OCI-LY7 (cell line): ENCODE measurements at regions of chrX and their contacts with region 1.

Region 1: GRCh38 chrX:135521405-135522189 is 1.1 kb downstream of the INTS6L start:
- DNase-seq: peak; percentile 86
- H3K4me3 ChIP-seq: peak overlapping the region; percentile 84
- H3K27ac ChIP-seq: peak overlapping the region; percentile 91
- H3K4me1 ChIP-seq: peaks cover 11% of the 10 kb centered on the region
- CTCF ChIP-seq: no peak

Region 2: DNA sequence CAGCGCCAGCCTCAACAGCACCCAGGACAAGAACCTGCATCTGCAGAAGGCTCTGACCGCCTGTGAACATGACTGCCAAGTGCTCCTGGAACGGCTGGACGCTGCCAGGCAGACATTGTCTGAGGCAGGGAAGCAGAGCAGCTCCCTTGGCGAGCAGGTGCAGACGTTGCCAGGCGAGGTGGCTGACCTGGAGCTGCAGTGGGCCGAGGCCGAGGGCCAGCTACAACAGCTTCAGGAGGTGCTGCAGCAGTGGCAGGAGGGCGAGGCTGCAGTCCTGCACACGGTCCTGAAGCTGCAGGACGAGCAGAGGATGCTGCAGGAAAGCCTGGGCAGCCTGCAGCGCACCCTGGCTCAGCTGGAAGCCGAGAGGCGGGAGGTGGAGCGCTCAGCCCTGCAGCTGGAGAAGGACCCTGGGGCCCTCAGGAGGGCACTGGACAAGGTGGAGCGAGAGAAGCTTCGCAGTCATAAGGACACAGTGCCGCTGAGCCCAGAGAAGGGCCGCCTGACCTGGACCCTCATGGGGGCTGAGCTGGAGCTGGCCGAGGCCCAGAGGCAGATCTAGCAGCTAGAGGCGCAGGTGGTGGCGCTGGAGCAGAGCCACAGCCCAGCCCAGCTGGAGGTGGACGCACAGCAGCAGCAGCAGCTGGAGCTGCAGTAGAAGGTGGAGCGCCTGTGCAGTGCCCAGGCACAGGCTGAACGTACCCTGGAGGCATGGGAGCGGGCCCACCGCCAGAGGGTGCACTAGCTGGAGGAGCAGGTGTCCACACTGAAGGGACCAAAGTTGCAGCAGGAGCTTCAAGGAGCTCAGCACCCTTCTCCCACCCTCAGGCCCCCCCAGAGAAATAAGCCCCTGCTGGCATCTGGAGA is 83.5 kb before region 1 on chrX:
- CTCF ChIA-PET with region 1: no interaction called
- POLR2A ChIA-PET with region 1: no interaction called
- intact Hi-C with region 1: no loop called
- DNase-seq: no peak
- H3K4me3 ChIP-seq: no peak overlapping the region
- H3K27ac ChIP-seq: no peak overlapping the region
- H3K4me1 ChIP-seq: no peaks in the 10 kb centered on the region
- CTCF ChIP-seq: no peak

Region 3: GRCh38 chrX:135973548-135974278 is 452.1 kb after region 1 on chrX and contains the start of gene MMGT1:
- CTCF ChIA-PET with region 1: no interaction called
- POLR2A ChIA-PET with region 1: no interaction called
- intact Hi-C with region 1: loop called (anchors 10 kb)
- DNase-seq: peak; percentile 85
- H3K4me3 ChIP-seq: peak within 1 kb of the TSS; percentile 96
- H3K27ac ChIP-seq: peak within 1 kb of the TSS; percentile 53
- H3K4me1 ChIP-seq: peaks cover 22% of the 10 kb centered on the region
- CTCF ChIP-seq: no peak
- total RNA-seq, gene MMGT1: 7.7 and 8.9 TPM in 2 replicates